WTC11 (cell line): ENCODE measurements at regions of chr18 and their contacts with region 1.

Region 1: GRCh38 chr18:48007955-48008701 is 77.7 kb upstream of the SMAD2 start:
- DNase-seq: peak; percentile 87
- ATAC-seq: peak; percentile 92
- H3K4me3 Mint-ChIP-seq: peak overlapping the region; percentile 73
- H3K27ac Mint-ChIP-seq: peak overlapping the region; percentile 89
- H3K4me1 Mint-ChIP-seq: peaks cover 30% of the 10 kb centered on the region
- H3K27me3 Mint-ChIP-seq: peaks cover 22% of the 10 kb centered on the region
- CTCF ChIP-seq: peak; percentile 73

Region 2: DNA sequence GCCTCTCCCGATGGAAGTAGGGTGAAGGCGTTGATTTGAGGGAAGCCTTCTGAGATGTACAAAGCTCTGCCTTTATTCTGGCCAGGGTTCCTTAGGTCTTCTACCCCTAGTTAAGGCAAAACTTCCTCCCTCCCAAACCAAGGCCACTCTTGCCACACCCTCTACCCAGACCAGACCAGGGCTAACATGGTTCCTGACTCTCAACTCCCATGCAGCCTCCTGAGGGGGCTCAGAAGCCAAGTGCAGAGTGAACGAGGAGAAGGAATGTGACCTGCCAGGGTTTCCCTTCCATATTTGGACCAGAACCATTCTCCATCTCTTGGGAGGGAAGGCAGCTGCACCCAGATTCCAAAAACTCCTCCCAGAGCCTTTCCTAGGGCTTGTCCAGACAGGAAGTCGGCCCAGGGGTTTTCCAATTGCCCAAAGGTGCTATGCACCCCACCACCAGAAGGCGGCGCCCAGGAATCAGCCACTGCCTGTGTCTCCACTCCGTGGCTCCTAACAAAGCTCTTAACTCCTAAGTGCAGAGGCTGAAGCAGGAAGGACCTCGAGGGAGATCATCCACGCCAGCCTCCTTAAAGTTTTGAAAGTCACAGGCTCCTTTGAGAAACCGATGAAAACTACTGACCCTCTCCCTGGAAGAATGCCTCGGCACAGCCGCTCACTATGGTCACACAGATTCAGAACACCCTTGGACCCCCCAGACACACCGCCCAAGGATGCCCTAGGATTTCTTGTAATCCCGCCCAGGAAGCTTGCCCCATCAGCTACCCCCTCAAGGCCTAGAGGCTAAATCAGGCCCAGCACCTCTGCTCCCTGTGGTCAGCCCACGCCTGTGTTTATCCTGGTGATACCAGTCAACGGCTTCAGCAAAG is 235.5 kb before region 1 on chr18:
- CTCF ChIA-PET with region 1: interaction called, 27 read pairs
- POLR2A ChIA-PET with region 1: interaction called, 7 read pairs
- DNase-seq: peak; percentile 91
- ATAC-seq: peak; percentile 92
- H3K4me3 Mint-ChIP-seq: no peak overlapping the region
- H3K27ac Mint-ChIP-seq: no peak overlapping the region
- H3K4me1 Mint-ChIP-seq: peaks cover 9% of the 10 kb centered on the region
- H3K27me3 Mint-ChIP-seq: no peaks in the 10 kb centered on the region; the same call in 1 of the 2 replicates
- CTCF ChIP-seq: peak; percentile 95

Region 3: GRCh38 chr18:47930931-47931717 is 77.0 kb before region 1 on chr18:
- CTCF ChIA-PET with region 1: interaction called, 12 read pairs
- POLR2A ChIA-PET with region 1: interaction called, 5 read pairs
- DNase-seq: peak; percentile 94
- ATAC-seq: peak; percentile 80
- H3K4me3 Mint-ChIP-seq: peak overlapping the region; percentile 73
- H3K27ac Mint-ChIP-seq: peak overlapping the region; percentile 95
- H3K4me1 Mint-ChIP-seq: peaks cover 49% of the 10 kb centered on the region
- H3K27me3 Mint-ChIP-seq: no peaks in the 10 kb centered on the region
- CTCF ChIP-seq: no peak

Region 4: GRCh38 chr18:48030616-48031480 is 22.7 kb after region 1 on chr18:
- CTCF ChIA-PET with region 1: interaction called, 12 read pairs
- POLR2A ChIA-PET with region 1: no interaction called
- DNase-seq: peak; percentile 59
- ATAC-seq: peak; percentile 91
- H3K4me3 Mint-ChIP-seq: no peak overlapping the region
- H3K27ac Mint-ChIP-seq: no peak overlapping the region
- H3K4me1 Mint-ChIP-seq: peaks cover 19% of the 10 kb centered on the region
- H3K27me3 Mint-ChIP-seq: no peaks in the 10 kb centered on the region
- CTCF ChIP-seq: peak; percentile 42; the same call in 1 of the 2 replicates